ENCODE measurements at regions of chr17 and their contacts with region 1.

Region 1: DNA sequence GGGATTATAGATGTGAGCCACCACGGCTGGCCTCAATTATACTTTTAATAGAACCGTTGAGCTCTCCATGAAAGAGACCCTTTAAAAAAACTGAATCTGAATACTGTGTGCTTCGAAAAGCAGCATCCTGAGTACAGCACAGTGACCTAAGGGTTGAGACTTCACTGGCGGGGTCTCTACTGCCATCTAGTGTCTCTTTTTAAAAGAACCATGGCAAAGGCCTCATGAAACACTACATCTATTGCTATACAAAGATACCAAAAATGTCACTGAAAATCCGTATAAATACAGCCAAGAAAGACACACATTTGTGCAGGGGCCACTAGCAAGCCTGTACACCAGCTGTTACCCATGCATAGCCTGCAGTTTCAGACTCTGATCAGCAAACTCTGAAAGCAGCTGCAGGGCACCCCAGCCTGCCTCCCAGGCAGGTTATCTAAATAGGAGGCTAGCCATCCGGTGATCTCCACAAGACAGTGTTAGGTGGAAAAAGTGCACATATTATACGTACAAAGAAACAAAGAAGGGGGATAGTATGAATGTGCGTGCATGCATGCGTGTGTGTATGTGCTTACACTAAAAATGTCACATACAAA is 35.3 kb downstream of the NPLOC4 start:
- DNase-seq: peak; percentile 48
- ATAC-seq: peak; percentile 99
- H3K4me3 Mint-ChIP-seq: no peak overlapping the region
- H3K27ac Mint-ChIP-seq: no peak overlapping the region
- H3K4me1 Mint-ChIP-seq: no peaks in the 10 kb centered on the region
- H3K27me3 Mint-ChIP-seq: no peaks in the 10 kb centered on the region

Region 2: DNA sequence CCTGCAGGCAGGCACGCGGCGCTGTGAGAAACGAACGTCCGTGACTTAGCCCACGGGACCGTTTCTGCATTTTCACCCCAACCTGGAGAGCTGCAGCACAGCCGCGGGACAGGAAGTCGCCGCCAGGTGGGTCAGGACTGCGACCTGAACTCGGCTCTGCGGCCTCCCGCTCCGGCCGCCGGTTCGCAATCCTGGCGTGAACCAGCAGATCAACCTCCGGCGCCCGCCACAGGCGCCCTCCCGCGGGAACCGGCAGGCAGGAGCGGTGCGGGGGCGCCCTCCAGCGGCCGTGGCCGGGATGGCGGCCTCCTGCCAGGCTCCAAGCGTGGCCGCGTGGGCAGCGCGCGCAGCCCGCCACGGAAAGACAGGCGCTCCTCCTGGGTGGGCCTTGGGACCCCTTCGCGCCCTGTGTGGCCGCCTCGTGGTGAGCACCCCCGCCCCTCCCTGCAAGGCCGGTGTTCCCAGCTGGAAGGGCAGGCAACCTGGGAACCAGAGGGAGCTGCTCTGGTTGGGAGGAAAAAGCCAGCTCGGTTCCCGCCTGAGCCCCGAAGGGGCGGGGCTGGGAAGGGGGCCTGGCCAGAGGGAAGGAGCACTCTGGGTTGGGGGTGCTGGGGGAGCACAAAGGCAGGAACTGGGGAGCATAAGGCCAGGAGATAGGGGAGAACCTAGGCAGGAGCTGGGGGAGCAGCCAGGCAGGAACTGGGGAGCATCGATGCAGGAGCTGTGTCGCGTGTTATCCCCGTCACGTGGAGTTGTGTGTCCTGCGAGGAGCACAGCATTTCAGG is 117.2 kb before region 1 on chr17:
- CTCF ChIA-PET with region 1: no interaction called
- POLR2A ChIA-PET with region 1: no interaction called
- intact Hi-C with region 1: no loop called
- DNase-seq: peak; percentile 94
- ATAC-seq: peak; percentile 68
- H3K4me3 Mint-ChIP-seq: peak overlapping the region; percentile 30
- H3K27ac Mint-ChIP-seq: no peak overlapping the region
- H3K4me1 Mint-ChIP-seq: peaks cover 16% of the 10 kb centered on the region
- H3K27me3 Mint-ChIP-seq: peaks cover 26% of the 10 kb centered on the region

Region 3: DNA sequence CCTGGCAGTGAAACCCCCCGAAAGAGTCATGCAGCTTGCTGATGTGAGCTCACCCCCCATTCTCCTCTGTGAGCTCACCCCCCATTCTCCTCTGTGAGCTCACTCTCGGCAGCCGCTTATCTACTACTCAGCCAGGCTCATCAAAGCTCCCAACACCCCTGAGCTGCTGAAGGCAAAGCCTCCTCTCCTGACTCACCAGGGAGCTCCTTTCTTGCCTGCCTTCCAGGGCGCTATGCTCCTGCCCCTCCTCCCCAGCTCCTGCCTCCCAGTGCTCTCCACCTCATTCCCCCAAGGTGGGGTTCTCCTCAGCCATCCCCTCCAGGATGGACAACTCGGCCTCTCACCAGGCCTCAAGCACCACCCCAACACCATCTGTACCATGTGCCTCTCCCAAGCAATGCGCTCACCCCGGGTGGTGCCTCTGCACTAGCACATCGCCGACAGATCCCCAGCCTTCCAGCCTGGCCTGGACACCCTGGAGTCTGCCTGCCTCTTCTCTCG is 21.8 kb before region 1 on chr17:
- CTCF ChIA-PET with region 1: interaction called, 18 read pairs
- POLR2A ChIA-PET with region 1: no interaction called
- intact Hi-C with region 1: no loop called
- DNase-seq: no peak
- ATAC-seq: no peak
- H3K4me3 Mint-ChIP-seq: no peak overlapping the region
- H3K27ac Mint-ChIP-seq: no peak overlapping the region
- H3K4me1 Mint-ChIP-seq: peaks cover 20% of the 10 kb centered on the region
- H3K27me3 Mint-ChIP-seq: no peaks in the 10 kb centered on the region